ENCODE measurements at regions of chr6 and their contacts with region 1.

Region 1: GRCh38 chr6:111973118-111973761 is 80.7 kb upstream of the CCN6 start:
- DNase-seq: peak; percentile 93
- H3K4me3 ChIP-seq: peak overlapping the region in 2 of 3 experiments; percentile 8 to 19
- H3K27ac ChIP-seq: peak overlapping the region; percentile 99
- H3K4me1 ChIP-seq: peaks cover 31% of the 10 kb centered on the region
- H3K27me3 ChIP-seq: no peaks in the 10 kb centered on the region
- CTCF ChIP-seq: no peak

Region 2: GRCh38 chr6:111823831-111824607 is 149.2 kb before region 1 on chr6:
- CTCF ChIA-PET with region 1: no interaction called
- dilution Hi-C with region 1: no loop called
- in situ Hi-C with region 1: no loop called
- intact Hi-C with region 1: no loop called
- DNase-seq: peak; percentile 60
- H3K4me3 ChIP-seq: no peak overlapping the region
- H3K27ac ChIP-seq: no peak overlapping the region
- H3K4me1 ChIP-seq: peaks cover 10% of the 10 kb centered on the region
- H3K27me3 ChIP-seq: no peaks in the 10 kb centered on the region
- CTCF ChIP-seq: no peak

Region 3: DNA sequence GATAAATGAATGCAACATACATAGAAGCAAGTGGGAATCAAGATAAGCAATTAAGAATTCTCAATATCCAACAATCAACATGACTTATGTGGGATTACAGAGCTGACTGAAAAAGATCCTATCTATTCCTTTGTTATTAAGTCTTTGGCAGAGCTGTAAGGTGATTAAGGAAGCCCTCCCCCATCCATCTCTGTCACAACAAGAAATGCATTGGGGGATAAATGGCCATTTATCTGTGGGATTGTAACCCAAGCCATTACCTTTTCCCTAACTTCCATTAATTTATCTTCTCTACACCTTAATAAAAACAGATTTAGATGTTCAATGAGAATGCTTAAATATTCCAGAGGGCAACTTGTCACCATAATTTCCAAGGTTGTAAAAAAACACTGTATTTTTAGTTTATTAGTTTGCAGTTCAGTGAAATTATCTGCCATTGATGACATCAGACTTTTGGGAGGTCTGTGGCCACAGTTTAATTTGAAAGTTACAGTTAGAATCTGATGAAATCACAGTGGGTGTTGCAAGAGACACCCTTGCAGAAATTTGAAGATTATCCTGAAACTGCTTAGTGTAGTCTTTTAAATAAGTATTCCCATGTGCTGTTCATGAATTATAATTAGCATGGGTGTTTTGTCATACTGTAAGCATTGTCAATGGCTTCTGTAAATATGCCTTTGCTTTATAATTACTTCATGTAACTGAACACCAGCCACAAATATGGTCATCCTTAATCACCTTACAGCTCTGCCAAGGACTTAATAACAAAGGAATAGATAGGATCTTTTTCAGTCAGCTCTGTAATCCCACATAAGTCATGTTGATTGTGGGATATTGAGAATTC is 50.6 kb before region 1 on chr6:
- CTCF ChIA-PET with region 1: no interaction called
- dilution Hi-C with region 1: no loop called
- in situ Hi-C with region 1: no loop called
- intact Hi-C with region 1: loop called (anchors 2 kb)
- DNase-seq: peak; percentile 44
- H3K4me3 ChIP-seq: no peak overlapping the region
- H3K27ac ChIP-seq: no peak overlapping the region
- H3K4me1 ChIP-seq: peaks cover 10% of the 10 kb centered on the region
- H3K27me3 ChIP-seq: no peaks in the 10 kb centered on the region
- CTCF ChIP-seq: no peak

Region 4: GRCh38 chr6:112037783-112038216 is 64.6 kb after region 1 on chr6:
- CTCF ChIA-PET with region 1: no interaction called
- dilution Hi-C with region 1: loop called (anchors 10 kb)
- in situ Hi-C with region 1: no loop called
- intact Hi-C with region 1: no loop called
- DNase-seq: peak; percentile 91
- H3K4me3 ChIP-seq: no peak overlapping the region
- H3K27ac ChIP-seq: peak overlapping the region; percentile 62
- H3K4me1 ChIP-seq: peaks cover 14% of the 10 kb centered on the region
- H3K27me3 ChIP-seq: no peaks in the 10 kb centered on the region
- CTCF ChIP-seq: no peak